Activated CD4-positive, alpha-beta T cell treated with anti-CD3 and anti-CD28 coated beads for 36 hours (primary cell): ENCODE measurements at regions of chr1 and their contacts with region 1.

Region 1: DNA sequence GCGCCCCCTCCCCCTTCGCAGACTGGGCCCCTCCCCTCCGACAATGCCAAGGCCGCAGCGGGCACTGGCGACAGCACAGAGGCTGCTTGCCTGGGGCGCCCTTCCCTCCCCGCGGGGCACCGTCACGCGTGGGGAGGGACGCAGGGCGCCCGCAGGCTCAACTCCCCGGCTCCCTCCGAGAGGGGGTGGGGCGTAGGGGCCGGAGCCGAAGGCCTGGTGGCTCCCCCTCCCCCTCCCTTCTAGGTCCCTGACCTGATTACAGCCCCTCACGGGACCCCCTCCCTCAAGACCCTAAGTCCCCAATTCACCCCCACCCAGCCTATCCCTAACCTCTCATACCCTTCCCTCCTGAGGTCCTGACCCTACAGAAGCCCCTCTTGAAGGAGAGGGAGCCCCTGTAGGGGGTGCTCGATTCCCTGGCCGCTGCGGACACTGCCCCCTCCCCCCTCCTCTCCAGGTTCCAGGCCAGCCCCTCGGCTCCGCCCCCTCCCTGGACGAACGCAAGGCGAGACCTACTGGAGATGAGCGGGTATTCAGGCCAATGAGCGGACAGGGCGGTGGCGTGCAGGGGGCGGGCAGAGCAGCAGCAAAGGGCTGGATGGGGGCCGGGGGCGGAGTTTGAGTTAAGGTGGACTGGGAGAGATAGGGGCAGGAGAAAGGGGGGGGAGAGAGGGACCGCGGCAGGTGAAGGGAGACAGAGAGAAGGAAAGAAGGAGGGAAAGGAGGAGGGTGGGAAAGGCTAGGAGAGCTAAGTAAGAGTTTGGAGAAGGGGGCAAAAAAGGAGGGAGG is 733 bp upstream of the ZBTB7B start:
- DNase-seq: peak; percentile 100
- ATAC-seq: peak; percentile 67
- H3K4me3 Mint-ChIP-seq: peak overlapping the region; percentile 96
- H3K27ac Mint-ChIP-seq: peak overlapping the region; percentile 94
- H3K4me1 Mint-ChIP-seq: peaks cover 54% of the 10 kb centered on the region
- H3K27me3 Mint-ChIP-seq: no peaks in the 10 kb centered on the region

Region 2: DNA sequence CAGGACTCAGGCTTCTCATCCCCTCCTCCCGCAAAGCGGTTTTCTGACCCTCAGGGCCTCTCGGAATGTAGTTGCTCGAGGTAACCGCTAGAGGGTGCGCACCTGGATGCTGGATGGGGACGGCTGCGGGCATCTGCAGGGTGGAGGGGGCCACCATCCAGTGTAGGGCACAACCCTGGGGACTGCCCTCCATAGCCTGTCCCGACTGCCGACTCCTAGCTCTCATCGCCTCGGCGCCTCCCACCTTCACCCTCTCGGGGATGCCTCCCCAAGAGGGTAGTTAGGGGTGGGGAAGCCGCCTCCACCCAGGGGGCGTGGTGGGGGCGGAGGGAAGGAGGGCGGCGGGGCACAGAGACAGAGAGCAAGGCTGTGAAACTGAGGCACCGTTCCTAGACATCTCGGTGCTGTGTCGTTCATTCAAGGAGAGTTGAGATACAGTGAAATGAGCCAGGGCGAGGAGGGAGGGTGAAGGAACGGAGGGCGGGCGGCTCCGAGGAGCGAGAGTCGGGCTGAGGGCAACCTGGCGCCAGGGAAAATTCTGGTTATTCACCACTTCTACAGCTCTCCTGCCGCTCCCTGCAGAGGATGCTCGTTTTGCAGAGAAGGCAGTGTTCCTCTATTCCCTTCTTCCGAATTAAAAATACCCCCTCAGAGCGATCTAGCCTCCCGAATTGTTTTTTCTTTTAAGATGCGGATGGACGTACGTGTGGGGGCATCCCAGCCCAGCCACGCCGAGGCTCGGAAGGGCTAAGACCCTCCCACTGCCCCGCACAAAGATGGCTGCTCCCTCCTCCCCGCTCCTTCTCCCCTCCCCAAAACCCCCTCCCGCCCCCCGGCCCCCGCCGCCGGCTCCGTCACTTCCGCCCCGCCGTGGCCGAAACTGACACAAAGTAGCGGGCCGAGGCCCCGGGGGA is 676.9 kb before region 1 on chr1 and contains the start of gene ATP8B2:
- CTCF ChIA-PET with region 1: no interaction called
- POLR2A ChIA-PET with region 1: no interaction called
- intact Hi-C with region 1: loop called in 1 of 2 experiments (anchors 2 kb)
- DNase-seq: peak; percentile 92
- ATAC-seq: peak; percentile 70
- H3K4me3 Mint-ChIP-seq: peak within 1 kb of the TSS; percentile 99
- H3K27ac Mint-ChIP-seq: peak within 1 kb of the TSS; percentile 94
- H3K4me1 Mint-ChIP-seq: peaks cover 39% of the 10 kb centered on the region
- H3K27me3 Mint-ChIP-seq: no peaks in the 10 kb centered on the region
- total RNA-seq, gene ATP8B2: 48.2 TPM

Region 3: DNA sequence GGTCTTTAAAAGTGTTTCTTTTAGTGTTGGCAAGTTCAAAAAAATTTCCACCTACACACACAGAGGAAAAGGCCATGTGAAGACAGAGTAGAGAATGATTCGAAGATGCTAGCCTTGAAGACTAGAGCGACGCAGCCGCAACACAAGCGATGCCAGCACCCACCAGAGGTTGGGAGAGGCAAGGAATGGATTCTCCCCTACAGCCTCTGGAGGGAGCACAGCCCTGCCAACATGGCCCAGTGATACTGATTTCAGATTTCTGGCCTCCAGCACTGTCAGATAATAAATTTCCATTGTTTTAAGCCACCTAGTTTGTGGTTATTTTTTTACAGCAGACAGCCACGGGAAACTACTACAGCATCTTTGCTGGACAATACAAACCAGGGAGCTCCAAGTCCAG is 387.0 kb before region 1 on chr1:
- CTCF ChIA-PET with region 1: no interaction called
- POLR2A ChIA-PET with region 1: no interaction called
- intact Hi-C with region 1: no loop called
- DNase-seq: no peak
- ATAC-seq: peak; percentile 34
- H3K4me3 Mint-ChIP-seq: no peak overlapping the region
- H3K27ac Mint-ChIP-seq: peak overlapping the region; percentile 81
- H3K4me1 Mint-ChIP-seq: peaks cover 61% of the 10 kb centered on the region
- H3K27me3 Mint-ChIP-seq: no peaks in the 10 kb centered on the region

Region 4: GRCh38 chr1:154911691-154912550 is 89.9 kb before region 1 on chr1:
- CTCF ChIA-PET with region 1: no interaction called
- POLR2A ChIA-PET with region 1: no interaction called
- intact Hi-C with region 1: no loop called
- DNase-seq: no peak
- ATAC-seq: no peak
- H3K4me3 Mint-ChIP-seq: no peak overlapping the region
- H3K27ac Mint-ChIP-seq: no peak overlapping the region
- H3K4me1 Mint-ChIP-seq: no peaks in the 10 kb centered on the region
- H3K27me3 Mint-ChIP-seq: no peaks in the 10 kb centered on the region

Region 5: DNA sequence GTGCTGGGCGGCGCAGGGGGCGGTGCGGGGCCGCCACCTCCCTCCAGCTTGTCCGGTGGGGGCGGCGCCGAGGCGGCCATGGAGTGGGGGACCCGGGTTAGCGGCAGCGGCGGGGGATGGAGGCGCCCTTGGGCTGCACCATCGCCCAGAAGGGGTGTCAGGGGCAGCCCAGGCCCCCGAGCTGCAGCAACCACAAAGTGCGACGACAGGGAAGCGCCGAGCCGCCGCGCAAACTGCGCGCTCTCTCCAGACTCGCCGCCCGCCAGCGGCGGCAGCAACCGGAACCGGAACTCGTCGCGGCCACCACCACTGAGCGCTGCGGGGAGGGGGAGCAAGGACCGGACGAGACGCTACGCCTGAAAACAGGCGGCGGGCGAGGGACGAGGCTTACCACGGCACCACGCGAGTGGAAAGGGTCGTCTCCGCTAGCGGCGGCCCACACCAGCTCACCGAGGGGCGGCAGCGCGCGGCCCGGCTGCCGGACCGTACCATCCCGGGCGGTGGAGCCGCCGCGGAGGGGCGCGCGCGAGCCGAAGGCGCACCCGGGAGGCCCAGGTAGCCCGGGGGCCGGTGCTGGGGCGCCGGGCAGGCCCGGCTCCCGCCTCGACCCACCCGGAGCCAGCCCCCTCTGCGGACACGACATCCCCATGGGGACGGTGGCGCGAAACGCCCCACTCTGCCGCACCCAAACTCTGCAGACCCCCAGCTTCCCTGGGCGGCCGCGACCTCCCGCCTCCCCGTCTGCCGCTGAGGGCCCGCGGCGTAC is 40.2 kb before region 1 on chr1 and contains the start of gene PYGO2:
- CTCF ChIA-PET with region 1: interaction called, 21 read pairs
- POLR2A ChIA-PET with region 1: interaction called, 3 read pairs
- intact Hi-C with region 1: loop called in 1 of 2 experiments (anchors 1 kb)
- DNase-seq: peak; percentile 90
- ATAC-seq: peak; percentile 81
- H3K4me3 Mint-ChIP-seq: peak within 1 kb of the TSS; percentile 91
- H3K27ac Mint-ChIP-seq: peak within 1 kb of the TSS; percentile 93
- H3K4me1 Mint-ChIP-seq: peaks cover 43% of the 10 kb centered on the region
- H3K27me3 Mint-ChIP-seq: no peaks in the 10 kb centered on the region
- total RNA-seq, gene PYGO2: 24.5 to 25.6 TPM

Region 6: DNA sequence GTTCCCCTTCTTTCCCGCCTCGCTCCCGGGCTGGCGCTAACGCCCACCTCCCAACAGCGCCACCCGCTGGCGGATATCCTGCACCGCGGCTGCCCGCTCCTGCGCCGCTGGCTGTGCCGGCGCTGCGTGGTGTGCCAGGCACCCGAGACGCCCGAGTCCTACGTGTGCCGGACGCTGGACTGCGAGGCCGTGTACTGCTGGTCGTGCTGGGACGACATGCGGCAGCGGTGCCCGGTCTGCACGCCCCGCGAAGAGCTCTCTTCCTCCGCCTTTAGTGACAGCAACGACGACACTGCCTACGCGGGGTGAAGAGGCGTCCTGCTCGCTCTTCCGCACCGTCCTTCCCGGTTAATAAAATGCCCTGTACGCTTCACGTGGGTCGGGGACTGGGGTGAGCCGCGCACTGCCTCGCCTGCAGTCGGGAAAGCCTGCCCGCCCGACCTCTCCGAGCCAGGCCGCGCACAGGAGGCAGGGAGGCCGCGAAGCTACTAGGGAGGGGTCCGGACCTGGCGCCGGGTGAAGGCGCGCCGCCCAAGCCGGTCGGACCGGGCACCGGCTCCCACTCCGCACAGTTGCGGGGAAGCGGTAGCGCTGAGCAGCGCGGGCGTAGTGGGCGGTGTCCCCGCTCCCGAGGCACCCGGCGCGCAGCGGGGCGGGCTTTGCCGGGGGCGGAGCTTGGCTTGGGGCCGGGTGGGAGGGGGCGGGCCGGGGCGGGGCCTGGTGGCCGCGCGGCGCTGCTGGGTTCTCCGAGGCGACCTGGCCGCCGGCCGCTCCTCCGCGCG is 48.9 kb after region 1 on chr1 and contains the start of gene ADAM15:
- CTCF ChIA-PET with region 1: interaction called, 7 read pairs
- POLR2A ChIA-PET with region 1: no interaction called
- intact Hi-C with region 1: loop called (anchors 1 to 5 kb)
- DNase-seq: peak; percentile 90
- ATAC-seq: peak; percentile 78
- H3K4me3 Mint-ChIP-seq: peak within 1 kb of the TSS; percentile 74
- H3K27ac Mint-ChIP-seq: peak within 1 kb of the TSS; percentile 80
- H3K4me1 Mint-ChIP-seq: peaks cover 20% of the 10 kb centered on the region
- H3K27me3 Mint-ChIP-seq: no peaks in the 10 kb centered on the region
- total RNA-seq, gene ADAM15: 42.4 to 48.8 TPM

Region 7: GRCh38 chr1:155172732-155173477 is 171.0 kb after region 1 on chr1 and contains the start of gene KRTCAP2:
- CTCF ChIA-PET with region 1: no interaction called
- POLR2A ChIA-PET with region 1: no interaction called
- intact Hi-C with region 1: loop called in 1 of 2 experiments (anchors 5 kb)
- DNase-seq: peak; percentile 97
- ATAC-seq: peak; percentile 83
- H3K4me3 Mint-ChIP-seq: peak within 1 kb of the TSS; percentile 98
- H3K27ac Mint-ChIP-seq: peak within 1 kb of the TSS; percentile 96
- H3K4me1 Mint-ChIP-seq: peaks cover 52% of the 10 kb centered on the region
- H3K27me3 Mint-ChIP-seq: no peaks in the 10 kb centered on the region
- total RNA-seq, gene KRTCAP2: 125 to 300 TPM

Region 8: DNA sequence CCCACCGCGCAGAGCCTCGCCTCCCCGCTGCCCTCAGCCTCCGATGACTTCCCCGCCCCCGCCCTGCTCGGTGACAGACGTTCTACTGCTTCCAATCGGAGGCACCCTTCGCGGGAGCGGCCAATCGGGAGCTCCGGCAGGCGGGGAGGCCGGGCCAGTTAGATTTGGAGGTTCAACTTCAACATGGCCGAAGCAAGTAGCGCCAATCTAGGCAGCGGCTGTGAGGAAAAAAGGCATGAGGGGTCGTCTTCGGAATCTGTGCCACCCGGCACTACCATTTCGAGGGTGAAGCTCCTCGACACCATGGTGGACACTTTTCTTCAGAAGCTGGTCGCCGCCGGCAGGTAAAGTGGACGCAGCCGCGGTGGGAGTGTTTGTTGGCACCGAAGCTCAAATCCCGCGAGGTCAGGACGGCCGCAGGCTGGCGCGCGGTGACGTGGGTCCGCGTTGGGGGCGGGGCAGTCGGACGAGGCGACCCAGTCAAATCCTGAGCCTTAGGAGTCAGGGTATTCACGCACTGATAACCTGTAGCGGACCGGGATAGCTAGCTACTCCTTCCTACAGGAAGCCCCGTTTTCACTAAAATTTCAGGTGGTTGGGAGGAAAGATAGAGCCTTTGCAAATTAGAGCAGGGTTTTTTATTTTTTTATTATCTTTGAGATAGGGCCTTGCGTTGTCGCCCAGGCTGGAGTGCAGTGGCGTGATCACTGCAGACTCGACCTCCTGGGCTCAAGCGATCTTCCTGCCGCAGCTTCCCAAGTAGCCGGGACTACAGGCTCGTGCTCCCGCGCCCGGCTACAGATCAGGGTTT is 1211.2 kb after region 1 on chr1 and contains the start of gene PMF1:
- CTCF ChIA-PET with region 1: no interaction called
- POLR2A ChIA-PET with region 1: no interaction called
- intact Hi-C with region 1: loop called in 1 of 2 experiments (anchors 10 kb)
- DNase-seq: peak; percentile 98
- ATAC-seq: peak; percentile 90
- H3K4me3 Mint-ChIP-seq: peak within 1 kb of the TSS; percentile 76
- H3K27ac Mint-ChIP-seq: peak within 1 kb of the TSS; percentile 98
- H3K4me1 Mint-ChIP-seq: peaks cover 41% of the 10 kb centered on the region
- H3K27me3 Mint-ChIP-seq: no peaks in the 10 kb centered on the region
- total RNA-seq, gene PMF1: 108 to 117 TPM